ENCODE measurements at regions of chr13 and their contacts with region 1.

Region 1: DNA sequence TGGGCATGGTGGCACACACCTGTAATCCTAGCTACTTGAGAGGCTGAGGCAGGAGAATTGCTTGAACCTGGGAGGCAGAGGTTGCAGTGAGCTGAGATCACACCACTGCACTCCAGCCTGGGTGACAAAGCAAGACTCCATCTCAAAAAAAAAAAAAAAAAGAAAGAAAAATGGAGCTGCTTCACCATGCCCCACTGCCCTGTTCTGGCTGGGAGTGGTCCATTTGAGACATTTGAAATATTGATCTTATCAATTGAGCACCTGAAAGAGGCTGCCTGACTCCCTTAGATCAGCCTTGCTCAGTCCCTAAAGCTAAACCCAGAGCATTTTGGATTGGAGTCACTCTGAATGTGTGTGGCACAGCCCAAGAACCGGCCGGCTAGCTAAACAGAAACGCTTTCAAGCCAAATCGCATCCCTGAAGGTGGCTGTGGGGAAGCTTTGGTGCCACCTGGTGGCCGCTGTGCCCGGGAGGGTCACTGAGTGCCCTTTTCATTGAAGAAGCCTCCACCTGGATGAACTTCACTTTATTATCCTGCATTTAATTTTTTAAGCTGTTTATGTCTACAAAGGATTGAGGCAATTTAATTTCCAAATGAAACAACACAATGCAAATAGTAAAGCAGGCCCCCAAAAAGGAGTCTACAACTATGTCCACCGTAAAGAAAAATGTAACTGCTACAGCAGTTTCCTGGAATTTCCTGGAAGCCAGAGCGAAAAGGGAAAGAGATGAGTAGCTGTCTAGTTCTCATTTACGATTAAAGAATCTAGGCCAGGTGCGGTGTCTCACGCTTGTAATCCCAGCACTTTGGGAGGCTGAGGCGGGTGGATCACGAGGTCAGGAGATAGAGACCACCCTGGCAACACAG is 53.1 kb upstream of the SERPINE3 start:
- DNase-seq: peak; percentile 22 to 72 (median 32)
- H3K4me3 ChIP-seq: no peak overlapping the region
- H3K4me3 Mint-ChIP-seq: no peak overlapping the region
- H3K27ac ChIP-seq: no peak overlapping the region
- H3K27ac Mint-ChIP-seq: no peak overlapping the region
- H3K4me1 ChIP-seq: no peaks in the 10 kb centered on the region
- H3K4me1 Mint-ChIP-seq: no peaks in the 10 kb centered on the region
- H3K27me3 ChIP-seq: no peaks in the 10 kb centered on the region
- H3K27me3 Mint-ChIP-seq: peaks cover 6 to 14% of the 10 kb centered on the region in 2 donors

Region 2: GRCh38 chr13:51125498-51126226 is 160.7 kb before region 1 on chr13:
- CTCF ChIA-PET with region 1: interaction called, 15 read pairs
- POLR2A ChIA-PET with region 1: no interaction called
- DNase-seq: peak in 1 of 5 donors; percentile 14
- H3K4me3 ChIP-seq: no peak overlapping the region
- H3K4me3 Mint-ChIP-seq: no peak overlapping the region
- H3K27ac ChIP-seq: no peak overlapping the region
- H3K27ac Mint-ChIP-seq: no peak overlapping the region
- H3K4me1 ChIP-seq: no peaks in the 10 kb centered on the region
- H3K4me1 Mint-ChIP-seq: peaks cover 3 to 14% (median 10%) of the 10 kb centered on the region in 3 donors
- H3K27me3 ChIP-seq: no peaks in the 10 kb centered on the region
- H3K27me3 Mint-ChIP-seq: peaks cover 3 to 24% of the 10 kb centered on the region in 2 donors

Region 3: DNA sequence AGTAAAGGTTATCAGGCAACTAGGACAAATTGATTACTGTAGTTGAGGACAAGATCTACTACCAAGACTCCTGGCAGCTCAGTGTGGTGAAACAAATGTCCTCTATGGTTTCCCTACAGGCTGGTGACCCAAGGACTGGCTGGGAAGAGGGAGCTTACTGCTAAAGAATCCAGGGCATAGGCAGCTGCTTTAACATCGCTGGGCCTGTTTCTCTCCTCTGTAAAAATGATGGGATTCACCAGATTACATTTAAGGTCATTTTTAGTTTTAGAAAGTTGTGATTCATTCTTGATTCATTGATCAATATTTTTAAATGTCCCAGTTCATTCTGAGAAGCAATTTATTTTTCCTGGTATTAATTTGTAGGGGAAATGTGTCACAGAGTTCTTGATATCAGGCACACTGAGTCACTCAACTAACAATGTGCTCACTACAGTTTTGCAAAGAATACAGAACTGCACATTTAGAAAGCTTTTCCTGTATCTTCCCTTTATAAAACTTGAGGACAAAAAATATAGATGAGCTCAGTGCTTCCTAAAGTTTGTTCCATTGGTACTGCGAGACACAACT is 83.8 kb before region 1 on chr13:
- CTCF ChIA-PET with region 1: no interaction called
- POLR2A ChIA-PET with region 1: no interaction called
- DNase-seq: no peak
- H3K4me3 ChIP-seq: no peak overlapping the region
- H3K4me3 Mint-ChIP-seq: no peak overlapping the region
- H3K27ac ChIP-seq: no peak overlapping the region
- H3K27ac Mint-ChIP-seq: no peak overlapping the region
- H3K4me1 ChIP-seq: no peaks in the 10 kb centered on the region
- H3K4me1 Mint-ChIP-seq: no peaks in the 10 kb centered on the region
- H3K27me3 ChIP-seq: no peaks in the 10 kb centered on the region
- H3K27me3 Mint-ChIP-seq: peaks cover 3 to 35% of the 10 kb centered on the region in 2 donors

Region 4: DNA sequence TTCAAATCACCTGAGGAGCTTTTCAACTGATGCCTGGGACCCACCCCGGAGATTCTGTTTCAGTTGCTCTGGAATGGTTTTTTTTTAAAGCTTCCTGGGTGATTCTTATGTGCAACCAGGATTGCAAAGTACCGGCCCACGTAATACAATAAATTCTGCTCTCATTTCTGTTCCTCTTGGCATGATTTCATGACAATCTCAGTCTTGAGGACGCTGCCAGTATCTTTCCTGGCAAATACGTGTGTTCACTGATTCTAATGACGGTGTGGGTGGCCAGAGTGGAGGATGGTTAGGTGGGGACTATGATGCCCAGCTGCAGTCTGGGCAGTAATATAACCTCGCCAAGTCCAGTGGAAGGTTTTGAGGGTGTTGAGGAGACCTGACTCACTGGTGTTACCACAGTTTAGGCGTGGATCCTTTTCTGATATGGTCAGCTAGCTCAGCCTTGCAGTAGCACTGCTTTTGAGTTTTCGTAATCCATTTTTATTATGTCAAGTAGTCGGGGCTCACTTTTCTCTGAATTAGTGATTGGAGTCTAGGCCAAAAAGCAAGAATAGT is 14.8 kb before region 1 on chr13:
- CTCF ChIA-PET with region 1: interaction called, 10 read pairs
- POLR2A ChIA-PET with region 1: interaction called, 3 read pairs
- DNase-seq: no peak
- H3K4me3 ChIP-seq: no peak overlapping the region
- H3K4me3 Mint-ChIP-seq: no peak overlapping the region
- H3K27ac ChIP-seq: no peak overlapping the region
- H3K27ac Mint-ChIP-seq: peak overlapping the region in 1 of 8 donors; percentile 71
- H3K4me1 ChIP-seq: no peaks in the 10 kb centered on the region
- H3K4me1 Mint-ChIP-seq: no peaks in the 10 kb centered on the region
- H3K27me3 ChIP-seq: no peaks in the 10 kb centered on the region
- H3K27me3 Mint-ChIP-seq: peaks cover 13 to 16% of the 10 kb centered on the region in 2 donors

Region 5: GRCh38 chr13:51297556-51297955 is 11.2 kb after region 1 on chr13:
- CTCF ChIA-PET with region 1: interaction called, 17 read pairs
- POLR2A ChIA-PET with region 1: no interaction called
- DNase-seq: no peak
- H3K4me3 ChIP-seq: no peak overlapping the region
- H3K4me3 Mint-ChIP-seq: no peak overlapping the region
- H3K27ac ChIP-seq: no peak overlapping the region
- H3K27ac Mint-ChIP-seq: no peak overlapping the region
- H3K4me1 ChIP-seq: no peaks in the 10 kb centered on the region
- H3K4me1 Mint-ChIP-seq: no peaks in the 10 kb centered on the region
- H3K27me3 ChIP-seq: no peaks in the 10 kb centered on the region
- H3K27me3 Mint-ChIP-seq: peaks cover 6 to 26% of the 10 kb centered on the region in 2 donors

Region 6: GRCh38 chr13:51303063-51303552 is 16.7 kb after region 1 on chr13:
- CTCF ChIA-PET with region 1: interaction called, 13 read pairs
- POLR2A ChIA-PET with region 1: no interaction called
- DNase-seq: no peak
- H3K4me3 ChIP-seq: no peak overlapping the region
- H3K4me3 Mint-ChIP-seq: no peak overlapping the region
- H3K27ac ChIP-seq: no peak overlapping the region
- H3K27ac Mint-ChIP-seq: no peak overlapping the region
- H3K4me1 ChIP-seq: no peaks in the 10 kb centered on the region
- H3K4me1 Mint-ChIP-seq: no peaks in the 10 kb centered on the region
- H3K27me3 ChIP-seq: no peaks in the 10 kb centered on the region
- H3K27me3 Mint-ChIP-seq: peaks cover 10 to 20% of the 10 kb centered on the region in 2 donors

Region 7: GRCh38 chr13:51479199-51479523 is 192.8 kb after region 1 on chr13:
- CTCF ChIA-PET with region 1: no interaction called
- POLR2A ChIA-PET with region 1: no interaction called
- DNase-seq: no peak
- H3K4me3 ChIP-seq: no peak overlapping the region
- H3K4me3 Mint-ChIP-seq: no peak overlapping the region
- H3K27ac ChIP-seq: no peak overlapping the region
- H3K27ac Mint-ChIP-seq: no peak overlapping the region
- H3K4me1 ChIP-seq: no peaks in the 10 kb centered on the region
- H3K4me1 Mint-ChIP-seq: no peaks in the 10 kb centered on the region
- H3K27me3 ChIP-seq: no peaks in the 10 kb centered on the region
- H3K27me3 Mint-ChIP-seq: no peaks in the 10 kb centered on the region

Region 8: GRCh38 chr13:51797664-51798488 is 511.5 kb after region 1 on chr13:
- CTCF ChIA-PET with region 1: interaction called, 15 read pairs
- POLR2A ChIA-PET with region 1: no interaction called
- DNase-seq: peak; percentile 29 to 71 (median 49)
- H3K4me3 ChIP-seq: no peak overlapping the region
- H3K4me3 Mint-ChIP-seq: peak overlapping the region in 1 of 7 donors; percentile 58
- H3K27ac ChIP-seq: no peak overlapping the region
- H3K27ac Mint-ChIP-seq: peak overlapping the region in 7 of 8 donors; percentile 34 to 99 (median 86)
- H3K4me1 ChIP-seq: peaks cover 16% of the 10 kb centered on the region
- H3K4me1 Mint-ChIP-seq: peaks cover 17 to 40% (median 20%) of the 10 kb centered on the region in 3 donors
- H3K27me3 ChIP-seq: no peaks in the 10 kb centered on the region
- H3K27me3 Mint-ChIP-seq: no peaks in the 10 kb centered on the region

Measured in CD8-positive, alpha-beta memory T cell (primary cell).